Ascending aorta (tissue), 2 donors: ENCODE measurements at regions of chr6 and their contacts with region 1.

Region 1: GRCh38 chr6:28080631-28081485 is 490 bp downstream of the ZNF165 start:
- DNase-seq: peak; percentile 75 to 96
- H3K4me3 ChIP-seq: peak overlapping the region; percentile 56 to 72
- H3K27ac ChIP-seq: peak overlapping the region; percentile 83
- H3K4me1 ChIP-seq: peaks cover 0 to 7% of the 10 kb centered on the region in 2 donors
- H3K27me3 ChIP-seq: no peaks in the 10 kb centered on the region
- CTCF ChIP-seq: no peak

Region 2: DNA sequence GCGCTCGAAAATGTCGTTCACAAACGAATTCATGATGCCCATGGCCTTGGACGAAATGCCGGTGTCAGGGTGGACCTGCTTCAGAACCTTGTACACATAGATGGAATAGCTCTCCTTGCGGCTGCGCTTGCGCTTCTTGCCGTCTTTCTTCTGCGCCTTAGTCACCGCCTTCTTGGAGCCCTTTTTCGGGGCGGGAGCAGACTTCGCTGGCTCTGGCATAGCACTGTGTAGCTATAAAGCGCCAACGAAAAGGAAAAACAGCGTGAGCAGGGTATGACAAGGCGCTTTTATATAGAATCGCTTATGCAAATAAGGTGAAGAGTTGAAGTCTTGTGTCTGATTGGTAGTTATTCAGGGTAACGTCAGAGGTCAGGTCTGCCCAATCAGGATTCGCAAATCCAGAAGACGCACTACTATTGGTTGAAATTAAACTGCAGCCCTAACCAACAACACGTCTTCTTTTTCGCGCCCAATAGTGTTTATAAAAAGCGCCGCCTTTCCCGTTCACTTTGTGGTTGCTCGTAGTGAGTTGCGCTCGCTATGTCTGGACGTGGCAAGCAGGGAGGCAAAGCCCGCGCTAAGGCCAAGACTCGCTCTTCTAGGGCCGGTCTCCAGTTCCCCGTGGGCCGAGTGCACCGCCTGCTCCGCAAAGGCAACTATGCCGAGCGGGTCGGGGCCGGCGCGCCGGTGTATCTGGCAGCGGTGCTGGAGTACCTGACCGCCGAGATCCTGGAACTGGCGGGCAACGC is 948.2 kb before region 1 on chr6:
- intact Hi-C with region 1: loop called (anchors 5 kb)
- DNase-seq: peak; percentile 82 to 97
- H3K4me3 ChIP-seq: peak overlapping the region; percentile 69 to 75
- H3K27ac ChIP-seq: peak overlapping the region; percentile 88 to 89
- H3K4me1 ChIP-seq: peaks cover 4 to 10% of the 10 kb centered on the region in 2 donors
- H3K27me3 ChIP-seq: no peaks in the 10 kb centered on the region
- CTCF ChIP-seq: no peak

Region 3: GRCh38 chr6:27902335-27903314 is 178.2 kb before region 1 on chr6:
- intact Hi-C with region 1: loop called (anchors 10 kb)
- DNase-seq: peak in 1 of 2 donors; percentile 93
- H3K4me3 ChIP-seq: peak overlapping the region; percentile 59 to 73
- H3K27ac ChIP-seq: peak overlapping the region; percentile 87 to 94
- H3K4me1 ChIP-seq: peaks cover 0 to 3% of the 10 kb centered on the region in 2 donors
- H3K27me3 ChIP-seq: no peaks in the 10 kb centered on the region
- CTCF ChIP-seq: no peak

Region 4: GRCh38 chr6:28136585-28137504 is 56.0 kb after region 1 on chr6:
- intact Hi-C with region 1: loop called (anchors 2 kb)
- DNase-seq: peak; percentile 60 to 95
- H3K4me3 ChIP-seq: peak overlapping the region; percentile 74 to 97
- H3K27ac ChIP-seq: peak overlapping the region; percentile 95 to 98
- H3K4me1 ChIP-seq: peaks cover 0 to 26% of the 10 kb centered on the region in 2 donors
- H3K27me3 ChIP-seq: no peaks in the 10 kb centered on the region
- CTCF ChIP-seq: no peak

Region 5: DNA sequence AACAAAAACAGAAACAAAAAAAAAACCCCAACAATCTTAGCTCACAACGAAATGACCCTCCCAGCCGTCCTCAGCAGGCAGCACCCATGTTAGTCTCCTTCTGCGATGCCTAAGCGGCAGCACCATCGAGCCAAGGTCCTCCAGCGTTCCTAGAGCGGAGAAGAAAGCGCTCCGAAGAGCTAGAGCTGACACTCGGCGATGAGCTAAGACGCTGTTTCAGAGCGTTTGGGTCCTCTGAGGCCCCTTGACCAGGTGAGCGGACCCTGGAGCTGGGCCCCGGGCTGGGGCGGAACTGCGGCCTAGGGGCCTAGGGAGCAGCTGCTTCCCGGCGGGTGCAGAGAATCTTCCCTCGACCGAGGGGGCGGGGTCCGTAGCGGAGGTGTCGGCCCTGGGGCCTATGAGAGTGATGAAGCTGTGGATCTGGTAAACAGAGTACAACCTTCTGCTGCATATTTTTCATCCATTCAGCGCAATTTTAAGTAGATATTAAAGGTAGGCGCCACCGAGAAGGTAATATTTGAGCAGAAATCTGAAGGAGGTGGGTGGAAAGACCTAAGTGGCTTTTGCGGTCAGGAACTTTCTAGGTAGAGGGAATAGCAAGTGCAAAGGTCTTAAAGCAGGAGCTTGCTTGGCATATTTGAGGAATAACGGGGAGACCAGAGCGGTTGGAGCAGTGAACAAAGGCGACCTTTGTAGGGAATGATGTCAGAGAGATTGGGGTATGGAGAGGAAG is 186.3 kb after region 1 on chr6 and contains the start of gene ZSCAN26:
- intact Hi-C with region 1: loop called (anchors 2 kb)
- DNase-seq: peak; percentile 21 to 89
- H3K4me3 ChIP-seq: peak within 1 kb of the TSS; percentile 70 to 80
- H3K27ac ChIP-seq: peak within 1 kb of the TSS; percentile 76 to 82
- H3K4me1 ChIP-seq: peaks cover 0 to 15% of the 10 kb centered on the region in 2 donors
- H3K27me3 ChIP-seq: no peaks in the 10 kb centered on the region
- CTCF ChIP-seq: no peak
- total RNA-seq, gene ZSCAN26: 2.6 TPM

Region 6: GRCh38 chr6:28580475-28580874 is 499.6 kb after region 1 on chr6:
- intact Hi-C with region 1: no loop called
- DNase-seq: no peak
- H3K4me3 ChIP-seq: no peak overlapping the region
- H3K27ac ChIP-seq: no peak overlapping the region
- H3K4me1 ChIP-seq: no peaks in the 10 kb centered on the region
- H3K27me3 ChIP-seq: no peaks in the 10 kb centered on the region
- CTCF ChIP-seq: no peak